AG04450 (cell line): ENCODE measurements at regions of chr3 and their contacts with region 1.

Region 1: DNA sequence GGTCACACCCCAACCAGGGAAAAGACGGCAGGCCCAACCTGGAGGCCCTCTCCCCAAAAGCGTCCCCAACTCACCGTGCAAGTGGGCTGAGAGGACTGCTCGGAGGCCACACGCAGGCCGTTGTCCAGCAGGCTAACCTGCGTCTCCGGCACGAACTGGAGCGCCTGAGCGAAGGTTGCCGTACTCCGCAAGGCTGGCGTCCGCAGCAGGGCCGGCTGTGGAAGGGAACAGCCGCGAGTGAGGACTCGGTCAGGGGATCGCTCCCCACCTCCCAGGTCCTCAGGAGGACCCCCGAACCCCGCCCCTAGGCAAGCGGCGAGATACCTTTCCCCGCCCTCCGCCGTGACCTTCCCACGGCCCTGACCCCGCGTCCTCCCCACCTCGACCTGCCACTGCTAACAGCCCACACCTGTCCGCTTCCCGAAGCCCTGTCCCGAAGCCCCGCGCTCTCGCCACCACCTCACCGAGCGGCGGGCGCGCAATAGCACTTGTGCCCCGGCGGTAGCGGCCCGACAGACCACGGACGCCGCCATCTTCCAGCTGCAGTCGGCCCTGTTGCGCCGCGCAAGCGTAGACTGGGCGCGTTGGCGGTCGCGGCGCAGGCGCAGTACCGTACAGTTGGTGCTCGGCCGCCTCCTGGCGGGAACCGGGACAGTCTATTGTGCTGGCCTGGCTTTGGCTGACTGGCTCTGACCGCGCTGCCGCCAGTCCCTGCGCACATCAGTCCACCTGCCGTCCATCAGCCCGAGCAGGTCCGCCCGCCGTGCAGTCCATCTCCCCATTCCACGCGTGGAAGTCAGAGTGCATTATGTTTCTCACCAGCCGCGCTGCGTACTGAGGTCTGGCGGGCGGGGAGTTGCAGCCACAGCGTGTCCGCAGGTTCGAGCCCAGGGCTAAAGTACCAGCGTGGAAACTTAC is at the start of gene UQCRC1:
- DNase-seq: peak; percentile 82
- H3K4me3 ChIP-seq: peak within 1 kb of the TSS; percentile 99
- H3K27ac ChIP-seq: peak within 1 kb of the TSS; percentile 11
- H3K27me3 ChIP-seq: no peaks in the 10 kb centered on the region
- CTCF ChIP-seq: peak; percentile 72
- polyA plus RNA-seq, gene UQCRC1: 379 and 468 TPM in 2 replicates

Region 2: DNA sequence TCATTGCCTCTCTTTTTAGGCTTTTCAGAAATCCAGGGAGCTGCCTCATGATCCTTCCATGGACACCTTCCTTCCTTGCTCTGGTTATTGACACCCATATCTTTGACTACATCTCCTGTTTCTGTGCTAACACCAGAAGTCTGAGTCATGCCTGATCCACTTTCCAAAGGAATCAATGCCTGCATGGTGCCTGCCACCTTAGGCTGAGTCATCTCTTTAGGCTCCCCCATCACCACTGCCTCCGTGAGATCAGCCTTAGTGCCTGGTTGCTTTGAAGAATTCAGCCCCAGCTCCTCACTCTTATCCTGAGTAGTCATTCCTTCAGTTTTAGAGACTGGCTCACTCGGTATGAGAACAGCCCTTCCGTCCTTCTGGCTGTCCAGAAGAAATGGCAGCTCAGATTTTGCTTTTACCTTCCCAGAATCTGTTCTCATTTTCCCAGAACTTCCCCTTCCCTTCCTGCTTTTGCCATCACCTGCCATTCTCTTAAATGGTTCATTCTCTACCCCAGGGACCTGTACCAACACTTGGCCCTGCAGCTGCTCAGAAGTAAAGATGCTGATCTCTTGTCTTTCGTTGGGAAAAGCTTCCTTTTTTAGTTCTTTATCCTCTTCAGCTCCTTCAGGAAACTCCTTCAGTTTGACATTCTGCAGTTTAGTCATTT is 698.4 kb before region 1 on chr3:
- CTCF ChIA-PET with region 1: no interaction called
- POLR2A ChIA-PET with region 1: no interaction called
- DNase-seq: peak; percentile 70
- H3K4me3 ChIP-seq: no peak overlapping the region
- H3K27ac ChIP-seq: peak overlapping the region; percentile 77
- H3K27me3 ChIP-seq: no peaks in the 10 kb centered on the region
- CTCF ChIP-seq: no peak

Region 3: GRCh38 chr3:48896936-48897335 is 287.6 kb after region 1 on chr3:
- CTCF ChIA-PET with region 1: no interaction called
- POLR2A ChIA-PET with region 1: interaction called, 11 read pairs
- DNase-seq: no peak
- H3K4me3 ChIP-seq: no peak overlapping the region
- H3K27ac ChIP-seq: no peak overlapping the region
- H3K27me3 ChIP-seq: no peaks in the 10 kb centered on the region
- CTCF ChIP-seq: no peak